Activated T-helper 2 cell treated with anti-CD3 and anti-CD28 coated beads, Interferon-gamma antibody, Interleukin-2, Interleukin-4, amounts not matched to agents 10 μg/mL and 5 μg/mL and 100 μg/mL, durations not matched to agents 14 hours and 24 hours and 36 hours (primary cell): ENCODE measurements at regions of chr3 and their contacts with region 1.

Region 1: GRCh38 chr3:50337191-50337841 is 3.3 kb downstream of the RASSF1 start:
- DNase-seq: peak; percentile 97
- H3K4me3 Mint-ChIP-seq: peak overlapping the region; percentile 95
- H3K27ac Mint-ChIP-seq: peak overlapping the region; percentile 93
- H3K4me1 Mint-ChIP-seq: peaks cover 41% of the 10 kb centered on the region
- H3K27me3 Mint-ChIP-seq: no peaks in the 10 kb centered on the region

Region 2: GRCh38 chr3:50235716-50236496 is 101.4 kb before region 1 on chr3 and contains the start of gene GNAI2:
- intact Hi-C with region 1: loop called (anchors 5 kb)
- DNase-seq: peak; percentile 99
- H3K4me3 Mint-ChIP-seq: peak within 1 kb of the TSS; percentile 95
- H3K27ac Mint-ChIP-seq: peak within 1 kb of the TSS; percentile 89
- H3K4me1 Mint-ChIP-seq: peaks cover 24% of the 10 kb centered on the region
- H3K27me3 Mint-ChIP-seq: no peaks in the 10 kb centered on the region
- total RNA-seq, gene GNAI2: 267 and 269 TPM in 2 replicates

Region 3: DNA sequence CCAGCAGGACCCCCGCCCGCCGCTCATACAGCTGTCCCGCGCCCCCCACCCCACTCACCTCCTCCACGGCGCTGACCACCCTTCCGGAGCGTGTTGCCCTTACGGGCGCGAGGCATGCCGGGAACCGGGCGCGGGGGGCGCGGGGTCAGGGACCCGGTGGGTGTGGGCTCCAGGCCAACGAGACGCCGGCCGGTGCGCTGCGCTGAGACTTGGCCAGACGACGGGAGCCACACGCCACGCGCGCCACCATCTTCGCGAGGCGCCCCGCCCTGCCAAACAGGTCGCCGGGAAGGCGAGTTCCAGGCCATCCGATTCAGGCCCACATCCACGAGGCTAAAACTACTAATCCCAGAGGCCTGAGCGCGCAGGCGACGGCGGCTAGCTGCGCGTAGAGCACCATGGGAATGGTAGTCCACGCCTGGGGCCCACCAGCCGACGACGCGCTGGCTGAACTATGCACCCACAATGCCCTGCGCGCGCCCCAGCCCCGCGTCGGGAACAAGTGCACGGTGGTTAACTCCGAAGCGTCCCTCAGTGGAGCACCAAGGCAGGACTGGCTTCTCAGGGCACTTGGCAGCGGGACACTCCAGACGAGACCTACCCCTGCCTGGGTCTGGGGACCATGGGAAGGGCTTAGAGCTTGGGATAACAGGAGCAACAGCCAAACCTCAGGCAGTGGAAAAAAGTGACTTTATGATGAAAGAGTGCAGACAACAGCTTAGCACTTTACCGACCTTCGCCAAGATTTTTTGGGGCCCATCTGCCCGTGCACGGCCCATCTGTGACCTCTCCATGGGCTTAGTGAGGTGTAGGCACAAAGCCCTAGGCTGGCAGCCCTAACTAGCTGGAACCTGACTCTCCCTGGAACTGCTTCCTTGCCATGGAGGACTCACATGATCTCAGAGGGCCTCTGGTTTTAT is 44.9 kb before region 1 on chr3 and contains the start of gene IFRD2:
- intact Hi-C with region 1: loop called (anchors 1 kb)
- DNase-seq: peak; percentile 96
- H3K4me3 Mint-ChIP-seq: peak within 1 kb of the TSS; percentile 95
- H3K27ac Mint-ChIP-seq: peak within 1 kb of the TSS; percentile 96
- H3K4me1 Mint-ChIP-seq: peaks cover 9% of the 10 kb centered on the region
- H3K27me3 Mint-ChIP-seq: no peaks in the 10 kb centered on the region
- total RNA-seq, gene IFRD2: 154 and 164 TPM in 2 replicates

Region 4: GRCh38 chr3:50350527-50351322 is 13.4 kb after region 1 on chr3 and contains the starts of genes CYB561D2 and NPRL2:
- intact Hi-C with region 1: loop called (anchors 1 kb)
- DNase-seq: peak; percentile 99
- H3K4me3 Mint-ChIP-seq: peak within 1 kb of the TSS; percentile 91
- H3K27ac Mint-ChIP-seq: peak within 1 kb of the TSS; percentile 96
- H3K4me1 Mint-ChIP-seq: peaks cover 36% of the 10 kb centered on the region
- H3K27me3 Mint-ChIP-seq: no peaks in the 10 kb centered on the region
- total RNA-seq, gene CYB561D2: 22.9 and 24.6 TPM in 2 replicates
- total RNA-seq, gene NPRL2: 34.5 and 42.7 TPM in 2 replicates

Region 5: GRCh38 chr3:50358911-50359759 is 21.8 kb after region 1 on chr3 and contains the start of gene TMEM115:
- intact Hi-C with region 1: loop called (anchors 2 kb)
- DNase-seq: peak; percentile 93
- H3K4me3 Mint-ChIP-seq: peak within 1 kb of the TSS; percentile 98
- H3K27ac Mint-ChIP-seq: peak within 1 kb of the TSS; percentile 94
- H3K4me1 Mint-ChIP-seq: peaks cover 27% of the 10 kb centered on the region
- H3K27me3 Mint-ChIP-seq: no peaks in the 10 kb centered on the region
- total RNA-seq, gene TMEM115: 17.8 and 19.2 TPM in 2 replicates

Region 6: DNA sequence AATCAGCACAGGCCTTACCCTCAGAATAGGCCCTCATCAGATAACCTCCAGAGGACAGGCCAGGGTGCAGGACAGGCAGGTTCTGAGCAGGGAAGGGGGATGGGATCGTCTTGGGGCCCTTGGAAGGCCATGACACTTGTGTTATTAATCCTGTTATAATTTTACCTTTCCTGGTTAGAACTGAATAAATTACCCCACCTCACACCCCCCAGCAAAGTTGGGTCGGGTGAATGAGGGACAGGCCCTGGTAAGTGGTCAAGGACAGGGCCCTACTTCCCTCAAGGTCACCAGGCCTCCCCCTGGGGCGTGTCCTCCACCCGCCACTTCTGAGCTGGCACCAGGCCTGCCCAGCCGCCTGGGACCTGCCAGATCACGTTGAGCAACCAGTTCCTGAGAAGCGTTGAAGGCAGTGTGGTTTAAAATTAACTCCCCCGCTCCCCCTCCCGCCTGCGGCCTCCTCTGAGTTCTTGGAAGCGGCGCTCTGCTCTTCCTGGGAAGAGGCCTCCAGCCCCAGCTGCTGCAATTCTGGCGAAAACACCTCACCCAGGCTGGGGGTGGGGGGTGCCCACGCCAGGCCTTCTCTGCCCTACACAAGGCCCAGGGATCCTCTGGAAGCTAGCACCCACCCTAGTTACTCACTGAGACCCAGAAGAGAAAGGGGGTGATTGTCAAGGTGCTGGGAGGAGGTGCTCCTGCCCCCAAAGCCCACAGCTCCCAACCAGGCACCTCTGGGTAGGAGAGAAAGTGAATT is 263.7 kb after region 1 on chr3:
- intact Hi-C with region 1: loop called (anchors 5 kb)
- DNase-seq: peak; percentile 80
- H3K4me3 Mint-ChIP-seq: peak overlapping the region; percentile 74
- H3K27ac Mint-ChIP-seq: peak overlapping the region; percentile 100
- H3K4me1 Mint-ChIP-seq: peaks cover 81% of the 10 kb centered on the region
- H3K27me3 Mint-ChIP-seq: no peaks in the 10 kb centered on the region